Activated naive CD4-positive, alpha-beta T cell treated with anti-CD3 and anti-CD28 coated beads for 36 hours (primary cell): ENCODE measurements at regions of chr18 and their contacts with region 1.

Region 1: GRCh38 chr18:49520661-49521145 is 33.7 kb upstream of the C18orf32 start:
- DNase-seq: no peak
- H3K4me3 Mint-ChIP-seq: no peak overlapping the region
- H3K27ac Mint-ChIP-seq: no peak overlapping the region
- H3K4me1 Mint-ChIP-seq: no peaks in the 10 kb centered on the region
- H3K27me3 Mint-ChIP-seq: peaks cover 3% of the 10 kb centered on the region

Region 2: DNA sequence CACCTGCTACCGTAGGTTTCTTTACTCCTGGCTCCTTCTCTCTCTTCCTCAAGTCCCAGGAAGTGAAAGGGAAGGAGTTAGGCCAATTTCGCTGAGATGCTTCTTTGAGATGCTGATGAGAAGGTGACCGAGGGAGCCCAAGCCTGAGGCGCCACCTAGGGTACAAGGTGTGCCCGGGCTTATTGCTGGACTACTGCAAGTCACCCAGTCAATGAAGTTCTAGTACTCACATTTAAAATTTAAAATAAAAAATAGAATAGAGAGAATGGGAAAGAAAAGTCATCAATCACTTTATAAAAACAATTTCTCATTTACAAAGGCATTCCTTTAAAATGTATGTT is 247.3 kb after region 1 on chr18:
- CTCF ChIA-PET with region 1: no interaction called
- intact Hi-C with region 1: loop called (anchors 5 kb)
- DNase-seq: peak; percentile 41
- H3K4me3 Mint-ChIP-seq: no peak overlapping the region
- H3K27ac Mint-ChIP-seq: no peak overlapping the region
- H3K4me1 Mint-ChIP-seq: no peaks in the 10 kb centered on the region
- H3K27me3 Mint-ChIP-seq: no peaks in the 10 kb centered on the region